ENCODE measurements at regions of chr19 and their contacts with region 1.

Region 1: DNA sequence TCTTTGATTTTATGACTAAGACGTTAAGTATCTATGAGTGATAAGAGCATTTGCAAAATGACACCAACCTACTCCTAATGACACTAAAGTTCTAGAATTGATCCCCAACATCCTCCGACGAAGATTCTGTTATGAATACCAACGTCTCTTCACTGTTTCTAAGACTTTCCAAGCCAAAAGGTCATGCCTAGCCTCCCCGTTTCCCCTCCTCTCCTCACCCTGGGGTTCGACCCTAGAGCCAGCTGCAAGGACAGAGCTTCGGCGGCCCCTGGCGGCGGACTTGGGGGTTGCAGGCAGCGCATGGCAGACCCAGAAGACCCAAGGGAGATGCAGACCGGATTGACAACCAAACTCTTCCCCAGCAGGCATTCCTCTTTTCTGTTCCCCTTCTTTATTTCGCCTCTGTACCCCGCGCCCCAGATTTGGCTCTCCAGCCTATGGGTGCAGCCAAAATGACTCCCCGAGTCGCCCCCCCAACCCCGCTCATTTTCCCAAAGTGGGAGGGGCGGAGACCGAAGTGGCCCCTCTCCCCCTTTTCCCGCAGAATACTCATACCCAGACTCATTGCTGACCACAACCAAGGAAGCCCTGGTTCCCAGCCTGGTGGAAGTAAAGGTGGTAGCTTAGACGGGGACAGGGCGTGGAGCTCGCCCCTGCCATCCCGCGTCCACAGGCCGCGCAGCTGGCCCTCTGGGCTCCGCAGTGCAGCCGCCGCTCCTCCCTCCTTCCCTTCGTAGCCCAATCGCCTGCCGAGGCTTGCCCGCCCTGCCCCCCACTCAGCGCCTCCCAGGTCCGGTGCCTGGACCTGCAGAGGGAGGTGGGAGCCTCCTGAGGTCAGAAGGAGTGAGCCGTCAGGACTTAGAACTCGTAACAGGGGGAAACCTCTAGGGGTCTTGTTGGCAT is 4.1 kb upstream of the EML2 start:
- DNase-seq: peak; percentile 86
- H3K4me3 Mint-ChIP-seq: peak overlapping the region; percentile 78
- H3K27ac Mint-ChIP-seq: peak overlapping the region; percentile 98
- H3K4me1 Mint-ChIP-seq: peaks cover 37% of the 10 kb centered on the region
- H3K27me3 Mint-ChIP-seq: no peaks in the 10 kb centered on the region

Region 2: DNA sequence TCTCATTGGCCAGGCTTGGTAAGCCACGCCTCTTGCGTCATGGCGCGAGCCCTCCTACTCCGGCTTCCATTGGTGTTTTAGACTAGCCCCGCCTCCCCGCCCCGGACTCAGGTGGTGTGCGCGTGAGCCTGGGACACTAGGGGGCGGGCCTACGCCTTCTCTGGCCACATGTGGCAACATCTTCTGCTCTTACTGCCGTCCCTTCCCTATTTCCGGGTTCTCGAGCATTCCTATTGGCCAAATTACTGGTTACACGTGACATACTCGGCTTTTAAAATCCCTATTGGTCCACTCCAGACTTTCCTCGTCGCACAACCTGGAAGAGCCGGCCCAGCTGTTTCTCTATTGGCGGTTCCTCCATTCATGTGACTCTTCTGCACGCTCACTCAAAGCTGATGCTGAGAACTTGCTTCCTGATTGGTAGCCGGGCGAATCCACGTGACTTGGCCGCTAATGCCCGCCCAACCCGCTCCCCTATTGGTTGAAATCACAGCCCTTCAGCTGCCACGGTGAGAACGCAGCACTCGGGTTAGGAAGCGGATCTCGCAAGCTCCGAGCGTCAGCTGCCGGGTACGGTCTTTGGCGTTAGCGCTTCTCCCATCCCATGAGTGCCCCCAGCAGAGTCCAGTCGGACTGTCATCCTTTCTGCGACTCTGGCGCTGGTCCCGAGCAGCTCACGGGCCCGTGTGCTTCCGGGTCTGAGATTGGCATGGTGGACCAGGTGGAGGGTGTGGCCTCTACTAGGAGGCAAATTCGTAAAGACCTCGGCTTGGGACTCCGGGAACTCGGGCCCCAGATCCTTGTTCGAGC is 464.8 kb before region 1 on chr19 and contains the start of gene BLOC1S3:
- intact Hi-C with region 1: loop called (anchors 1 kb)
- DNase-seq: peak; percentile 100
- H3K4me3 Mint-ChIP-seq: peak within 1 kb of the TSS; percentile 88
- H3K27ac Mint-ChIP-seq: peak within 1 kb of the TSS; percentile 88
- H3K4me1 Mint-ChIP-seq: peaks cover 19% of the 10 kb centered on the region
- H3K27me3 Mint-ChIP-seq: no peaks in the 10 kb centered on the region
- total RNA-seq, gene BLOC1S3: 10.4 and 10.5 TPM in 2 replicates

Region 3: DNA sequence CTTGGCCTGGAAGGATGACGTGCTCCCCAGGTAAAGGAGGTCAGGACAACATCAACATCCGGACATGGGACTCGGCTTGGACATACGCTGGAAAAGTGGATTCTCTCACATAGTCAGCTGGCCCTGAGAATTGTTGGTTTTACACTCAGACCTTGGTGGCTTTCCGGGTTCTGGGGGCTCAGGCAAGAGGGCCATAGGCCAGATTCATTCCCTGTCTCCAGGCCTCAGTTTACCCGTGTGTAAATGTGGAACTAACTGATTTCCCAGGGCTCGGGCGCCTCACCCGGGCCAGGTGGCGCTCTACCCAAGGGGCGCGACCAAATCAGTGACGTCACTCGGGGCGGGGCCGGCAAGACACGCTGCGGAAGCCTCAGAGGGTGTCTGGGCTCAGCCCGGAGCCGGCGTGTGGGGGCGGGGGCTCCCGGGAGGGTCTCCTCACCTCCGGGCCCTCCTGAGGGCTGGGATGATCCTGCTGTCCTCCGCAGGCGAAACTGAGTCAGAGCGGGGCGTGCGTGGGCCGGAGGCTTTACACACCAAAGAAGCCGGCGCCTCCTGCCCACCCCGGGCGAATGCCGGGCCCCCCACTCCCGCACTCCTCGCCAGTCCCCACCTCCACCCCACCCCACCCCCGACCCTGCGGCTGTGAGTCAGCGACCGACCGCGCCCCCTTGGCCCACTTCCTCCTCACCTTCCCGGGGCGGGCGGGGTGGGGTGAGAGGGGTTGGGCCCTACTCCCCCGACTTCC is 136.9 kb before region 1 on chr19:
- intact Hi-C with region 1: loop called (anchors 1 kb)
- DNase-seq: peak; percentile 94
- H3K4me3 Mint-ChIP-seq: peak overlapping the region; percentile 95
- H3K27ac Mint-ChIP-seq: peak overlapping the region; percentile 95
- H3K4me1 Mint-ChIP-seq: peaks cover 20% of the 10 kb centered on the region
- H3K27me3 Mint-ChIP-seq: peaks cover 3% of the 10 kb centered on the region

Region 4: GRCh38 chr19:45607071-45608029 is 35.9 kb before region 1 on chr19:
- intact Hi-C with region 1: loop called (anchors 1 kb)
- DNase-seq: peak; percentile 19
- H3K4me3 Mint-ChIP-seq: no peak overlapping the region
- H3K27ac Mint-ChIP-seq: peak overlapping the region; percentile 73
- H3K4me1 Mint-ChIP-seq: peaks cover 11% of the 10 kb centered on the region
- H3K27me3 Mint-ChIP-seq: peaks cover 12% of the 10 kb centered on the region

Region 5: DNA sequence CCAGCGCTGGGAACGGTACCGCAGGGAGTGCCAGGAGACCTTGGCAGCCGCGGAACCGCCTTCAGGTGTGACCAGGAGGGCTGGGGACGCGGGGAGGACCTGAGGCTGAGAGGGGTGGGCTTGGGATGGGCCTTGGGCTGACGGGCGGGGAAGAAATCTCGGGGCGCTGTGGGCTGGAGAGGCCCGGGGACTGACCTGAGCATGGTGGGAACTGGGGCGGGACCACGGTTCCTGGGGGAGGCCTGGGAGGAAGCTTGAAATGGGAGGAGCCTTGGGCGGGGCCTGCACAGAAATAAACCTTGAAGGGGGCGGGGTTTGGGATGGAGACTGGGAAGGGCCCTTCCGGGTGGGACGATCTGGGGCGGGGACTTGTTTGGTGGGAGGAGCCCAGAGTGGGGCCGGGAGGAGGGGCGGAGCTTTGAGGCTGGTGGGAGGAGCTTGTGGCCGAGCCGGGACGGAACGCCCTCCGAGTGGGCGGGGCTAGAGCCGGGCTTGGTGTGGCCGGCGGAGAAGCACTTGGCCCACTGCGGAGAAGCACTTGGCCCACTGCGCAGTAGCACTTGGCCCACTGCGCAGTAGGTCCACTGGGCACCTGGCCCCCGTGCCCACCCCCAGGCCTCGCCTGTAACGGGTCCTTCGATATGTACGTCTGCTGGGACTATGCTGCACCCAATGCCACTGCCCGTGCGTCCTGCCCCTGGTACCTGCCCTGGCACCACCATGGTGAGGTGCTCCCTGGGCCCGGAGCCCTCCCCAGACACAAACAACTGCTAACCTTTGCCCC is 27.6 kb after region 1 on chr19:
- intact Hi-C with region 1: loop called (anchors 1 kb)
- DNase-seq: peak; percentile 68
- H3K4me3 Mint-ChIP-seq: peak overlapping the region; percentile 64
- H3K27ac Mint-ChIP-seq: peak overlapping the region; percentile 63
- H3K4me1 Mint-ChIP-seq: peaks cover 30% of the 10 kb centered on the region
- H3K27me3 Mint-ChIP-seq: peaks cover 10% of the 10 kb centered on the region

Region 6: DNA sequence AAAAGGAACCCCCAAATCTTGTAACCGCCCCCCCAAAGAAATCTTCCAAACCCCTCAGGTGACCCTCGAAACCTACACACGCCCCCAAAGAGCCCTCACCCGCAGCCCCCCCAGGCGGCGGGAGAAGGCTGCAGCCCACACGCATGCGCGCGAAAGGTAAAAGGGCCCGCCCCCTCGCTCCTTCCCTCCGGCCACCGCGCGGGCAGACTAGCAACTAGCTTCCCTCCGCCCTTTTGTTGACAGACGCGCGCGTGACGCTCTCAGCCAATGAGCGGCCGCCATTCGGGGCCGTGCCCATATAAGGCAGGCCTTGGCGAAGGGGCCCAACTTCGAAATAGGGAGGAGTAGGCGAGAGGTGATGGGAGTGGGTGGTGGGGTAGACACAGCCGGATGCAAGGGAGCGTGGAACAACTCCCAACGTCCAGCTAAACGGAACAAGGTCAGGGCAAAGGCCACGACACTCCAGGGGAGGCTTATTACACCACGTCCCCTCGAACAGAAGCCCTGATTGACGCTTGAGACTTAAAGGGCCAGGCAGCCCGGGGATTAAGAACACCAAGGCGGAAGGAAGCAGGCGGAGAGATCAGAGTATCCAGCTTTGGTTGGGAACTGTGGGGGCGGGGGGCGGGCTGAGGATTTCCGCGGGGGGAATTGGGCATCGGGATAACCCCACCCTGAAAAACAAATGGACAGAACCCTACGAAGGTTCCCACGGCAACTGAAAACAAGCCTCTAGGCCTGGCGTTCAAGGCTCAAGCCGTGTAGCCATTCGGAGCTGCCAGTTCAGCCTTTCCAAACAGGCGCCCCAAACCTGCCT is 74.1 kb after region 1 on chr19:
- intact Hi-C with region 1: loop called (anchors 2 kb)
- DNase-seq: peak; percentile 99
- H3K4me3 Mint-ChIP-seq: peak overlapping the region; percentile 96
- H3K27ac Mint-ChIP-seq: peak overlapping the region; percentile 96
- H3K4me1 Mint-ChIP-seq: peaks cover 40% of the 10 kb centered on the region
- H3K27me3 Mint-ChIP-seq: no peaks in the 10 kb centered on the region

Region 7: DNA sequence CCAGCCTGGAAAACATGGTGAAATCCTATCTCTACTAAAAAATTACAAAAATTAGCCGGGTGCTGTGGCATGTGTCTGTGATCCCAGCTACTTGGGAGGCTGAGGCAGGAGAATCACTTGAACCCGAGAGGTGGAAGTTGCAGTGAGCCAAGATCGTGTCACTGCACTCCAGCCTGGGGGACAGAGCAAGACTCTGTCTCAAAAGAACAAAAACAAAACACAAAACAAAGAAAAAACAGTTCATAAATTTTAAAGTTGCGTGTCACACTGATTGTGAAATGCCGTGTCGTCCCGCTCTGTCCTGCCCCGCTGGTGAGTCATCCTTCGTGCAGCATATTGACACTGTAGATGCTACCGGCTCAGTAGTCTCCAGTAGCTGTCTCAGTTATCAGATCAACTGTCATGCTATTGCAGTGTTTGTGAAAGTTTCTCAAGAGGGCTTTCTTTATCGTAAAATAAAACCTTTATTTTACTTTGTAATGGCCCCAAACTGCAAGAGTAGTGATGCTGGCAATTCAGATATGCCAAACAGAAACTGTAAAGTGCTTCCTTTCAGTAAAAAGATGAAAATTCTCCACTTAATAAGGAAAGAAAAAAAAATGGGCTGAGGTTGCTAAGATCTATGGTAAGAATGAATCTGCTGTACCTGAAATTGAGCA is 549.8 kb after region 1 on chr19:
- intact Hi-C with region 1: no loop called
- DNase-seq: no peak
- H3K4me3 Mint-ChIP-seq: no peak overlapping the region
- H3K27ac Mint-ChIP-seq: no peak overlapping the region
- H3K4me1 Mint-ChIP-seq: no peaks in the 10 kb centered on the region
- H3K27me3 Mint-ChIP-seq: peaks cover 29% of the 10 kb centered on the region

Measured in activated T-helper 1 cell treated with anti-CD3 and anti-CD28 coated beads, Interleukin-12 subunit alpha, Interleukin-12 subunit beta, Interleukin-2, Interleukin-4 antibody, amounts not matched to agents 30 ng/mL and 10 ng/mL and 1 ng/mL, durations not matched to agents 14 hours and 24 hours and 36 hours (primary cell).